B cell (primary cell): ENCODE measurements at regions of chr14 and their contacts with region 1.

Region 1: DNA sequence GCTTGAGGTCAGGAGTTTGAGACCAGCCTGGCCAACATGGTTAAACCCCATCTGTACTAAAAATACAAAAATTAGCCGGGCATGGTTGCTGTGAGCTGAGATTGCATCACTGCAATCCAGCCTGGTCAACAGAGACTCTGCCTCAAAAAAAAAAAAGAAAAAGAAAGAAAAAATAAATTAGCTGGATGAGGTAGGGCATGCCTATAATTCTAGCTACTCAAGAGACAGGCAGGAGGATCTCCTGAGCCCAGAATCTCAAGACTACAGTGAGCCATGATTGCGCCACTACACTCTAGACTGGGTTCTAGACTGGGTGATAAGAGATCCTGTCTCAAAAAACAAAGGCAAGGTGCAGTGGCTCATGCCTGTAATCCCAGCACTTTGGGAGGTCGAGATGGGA is 16.9 kb downstream of the PPP4R3A start:
- DNase-seq: no peak
- ATAC-seq: no peak
- H3K4me3 ChIP-seq: no peak overlapping the region
- H3K4me3 Mint-ChIP-seq: no peak overlapping the region
- H3K27ac ChIP-seq: peak overlapping the region in 1 of 2 donors; percentile 40
- H3K27ac Mint-ChIP-seq: peak overlapping the region; percentile 70
- H3K4me1 ChIP-seq: peaks cover 61 to 65% of the 10 kb centered on the region in 2 donors
- H3K4me1 Mint-ChIP-seq: peaks cover 61% of the 10 kb centered on the region
- H3K27me3 ChIP-seq: no peaks in the 10 kb centered on the region
- H3K27me3 Mint-ChIP-seq: no peaks in the 10 kb centered on the region
- CTCF ChIP-seq: no peak

Region 2: GRCh38 chr14:91510174-91511042 is 17.2 kb after region 1 on chr14 and contains the start of gene PPP4R3A:
- CTCF ChIA-PET with region 1: interaction called, 5 read pairs
- POLR2A ChIA-PET with region 1: interaction called, 17 read pairs
- intact Hi-C with region 1: loop called (anchors 1 kb)
- DNase-seq: peak; percentile 97
- ATAC-seq: peak; percentile 87
- H3K4me3 ChIP-seq: peak within 1 kb of the TSS; percentile 72 to 99 (median 84)
- H3K4me3 Mint-ChIP-seq: peak within 1 kb of the TSS; percentile 99
- H3K27ac ChIP-seq: peak within 1 kb of the TSS; percentile 97 to 100
- H3K27ac Mint-ChIP-seq: peak within 1 kb of the TSS; percentile 100
- H3K4me1 ChIP-seq: peaks cover 32% of the 10 kb centered on the region in 2 donors
- H3K4me1 Mint-ChIP-seq: peaks cover 37% of the 10 kb centered on the region
- H3K27me3 ChIP-seq: no peaks in the 10 kb centered on the region
- H3K27me3 Mint-ChIP-seq: no peaks in the 10 kb centered on the region
- CTCF ChIP-seq: no peak
- total RNA-seq, gene PPP4R3A: 184 and 189 TPM in 2 replicates

Region 3: GRCh38 chr14:91586410-91586809 is 93.2 kb after region 1 on chr14:
- CTCF ChIA-PET with region 1: no interaction called
- POLR2A ChIA-PET with region 1: no interaction called
- intact Hi-C with region 1: no loop called
- DNase-seq: no peak
- ATAC-seq: no peak
- H3K4me3 ChIP-seq: no peak overlapping the region
- H3K4me3 Mint-ChIP-seq: no peak overlapping the region
- H3K27ac ChIP-seq: no peak overlapping the region
- H3K27ac Mint-ChIP-seq: no peak overlapping the region
- H3K4me1 ChIP-seq: no peaks in the 10 kb centered on the region
- H3K4me1 Mint-ChIP-seq: no peaks in the 10 kb centered on the region
- H3K27me3 ChIP-seq: peaks cover 0 to 4% (median 2%) of the 10 kb centered on the region in 4 experiments
- H3K27me3 Mint-ChIP-seq: peaks cover 27% of the 10 kb centered on the region
- CTCF ChIP-seq: no peak

Region 4: GRCh38 chr14:91708795-91709194 is 215.6 kb after region 1 on chr14:
- CTCF ChIA-PET with region 1: no interaction called
- POLR2A ChIA-PET with region 1: no interaction called
- intact Hi-C with region 1: no loop called
- DNase-seq: no peak
- ATAC-seq: no peak
- H3K4me3 ChIP-seq: no peak overlapping the region
- H3K4me3 Mint-ChIP-seq: no peak overlapping the region
- H3K27ac ChIP-seq: no peak overlapping the region
- H3K27ac Mint-ChIP-seq: no peak overlapping the region
- H3K4me1 ChIP-seq: no peaks in the 10 kb centered on the region
- H3K4me1 Mint-ChIP-seq: no peaks in the 10 kb centered on the region
- H3K27me3 ChIP-seq: no peaks in the 10 kb centered on the region
- H3K27me3 Mint-ChIP-seq: peaks cover 24% of the 10 kb centered on the region
- CTCF ChIP-seq: no peak